Left colon (tissue), 2 donors: ENCODE measurements at regions of chr5 and their contacts with region 1.

Region 1: DNA sequence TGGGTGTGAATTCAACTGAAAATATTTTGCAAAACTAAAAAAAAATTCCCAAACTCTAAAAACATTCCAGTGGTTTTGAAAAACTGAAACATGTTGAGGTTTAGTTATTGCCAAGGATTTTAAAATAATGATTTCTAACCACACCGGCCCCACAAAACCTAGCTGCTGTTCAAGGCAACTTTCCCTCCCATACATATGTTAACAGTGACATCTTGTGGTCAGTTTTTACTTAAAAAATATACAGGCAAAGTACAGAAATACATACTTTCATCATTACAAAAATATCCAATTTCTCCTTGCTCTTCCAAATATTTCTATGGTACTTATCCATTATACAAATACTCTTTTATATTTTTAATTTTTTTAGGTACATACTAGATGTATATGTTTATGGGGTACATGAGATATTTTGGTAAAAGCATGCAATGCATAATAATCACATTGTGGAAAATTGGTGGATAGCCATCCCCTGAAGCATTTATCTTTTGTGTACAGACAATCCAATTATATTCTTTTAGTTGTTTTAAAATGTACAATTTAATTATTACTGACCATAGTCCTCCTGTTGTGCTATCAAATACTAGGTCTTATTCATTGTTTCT is 34.4 kb upstream of the MRPS30 start:
- DNase-seq: no peak
- ATAC-seq: no peak

Region 2: GRCh38 chr5:43729846-43730478 is 1044.4 kb before region 1 on chr5:
- intact Hi-C with region 1: loop called in 1 of 2 experiments (anchors 10 kb)
- DNase-seq: no peak
- ATAC-seq: no peak

Region 3: DNA sequence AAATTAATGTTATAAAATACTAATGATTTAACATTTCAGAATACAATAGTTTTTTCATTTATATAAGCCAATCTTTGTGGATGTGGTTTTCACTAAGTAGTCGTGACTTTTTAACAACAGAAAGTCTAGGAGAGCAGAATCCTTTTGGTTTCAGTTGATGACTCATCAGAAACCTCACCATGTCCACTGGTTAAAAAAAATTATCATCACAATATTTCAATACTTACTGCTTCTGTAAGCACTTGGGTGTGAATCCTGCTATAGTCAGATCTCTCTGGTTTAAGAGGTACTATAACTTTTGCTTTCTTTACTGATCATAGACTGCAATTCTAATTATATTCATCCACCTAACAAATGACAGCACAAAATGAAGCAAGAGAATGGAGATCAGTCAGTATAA is 111.5 kb after region 1 on chr5:
- intact Hi-C with region 1: no loop called
- DNase-seq: no peak
- ATAC-seq: no peak